PC-9 (cell line): ENCODE measurements at regions of chr6 and their contacts with region 1.

Region 1: DNA sequence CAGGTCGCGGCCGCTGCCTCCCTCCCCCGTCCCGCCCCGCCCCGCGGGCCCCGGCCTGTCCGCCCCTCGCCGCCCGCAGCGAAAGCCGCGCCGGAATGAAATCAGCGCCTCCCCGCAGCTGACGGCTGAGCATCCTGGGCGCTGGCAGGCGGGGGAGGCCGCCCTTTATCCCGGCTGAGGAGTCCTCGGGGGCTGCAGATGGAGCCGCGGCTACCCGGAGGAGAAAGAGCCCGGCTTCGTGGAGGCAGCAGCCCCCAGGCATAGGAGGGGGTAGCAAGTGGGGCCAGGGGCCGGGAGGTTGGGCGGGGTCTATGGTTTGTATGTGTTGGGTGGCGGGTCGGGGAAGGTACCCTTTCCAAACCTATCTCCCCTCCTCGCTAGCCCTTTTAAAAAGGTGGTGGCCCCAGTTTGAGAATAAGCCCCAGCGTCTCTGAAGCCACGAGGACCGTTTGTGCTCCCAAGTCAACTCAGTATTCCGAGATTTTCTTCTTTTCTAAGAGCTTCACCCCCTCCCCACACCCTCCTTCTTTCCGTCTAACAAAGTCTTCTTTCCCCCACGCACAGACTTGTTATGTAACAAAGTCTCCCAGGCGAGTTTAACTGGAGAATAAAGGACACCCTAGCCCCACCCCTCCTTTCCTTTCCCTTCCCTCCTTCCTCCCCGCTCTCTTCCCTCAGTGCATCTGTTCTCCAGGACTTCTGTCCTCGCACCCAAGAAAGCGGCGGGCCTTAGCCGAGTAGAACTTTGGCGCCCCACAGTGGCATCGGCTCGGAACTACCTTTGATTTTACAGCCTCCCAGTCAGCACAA is 11.0 kb downstream of the POU3F2 start:
- DNase-seq: peak in 1 of 2 experiments; percentile 73
- H3K4me3 ChIP-seq: no peak overlapping the region
- H3K27ac ChIP-seq: no peak overlapping the region
- H3K4me1 ChIP-seq: no peaks in the 10 kb centered on the region
- H3K27me3 ChIP-seq: no peaks in the 10 kb centered on the region
- CTCF ChIP-seq: peak; percentile 92

Region 2: GRCh38 chr6:97068211-97068610 is 1777.2 kb before region 1 on chr6:
- CTCF ChIA-PET with region 1: no interaction called
- POLR2A ChIA-PET with region 1: no interaction called
- intact Hi-C with region 1: loop called (anchors 2 kb)
- DNase-seq: no peak
- H3K4me3 ChIP-seq: no peak overlapping the region
- H3K27ac ChIP-seq: no peak overlapping the region
- H3K4me1 ChIP-seq: no peaks in the 10 kb centered on the region
- H3K27me3 ChIP-seq: no peaks in the 10 kb centered on the region
- CTCF ChIP-seq: peak; percentile 88

Region 3: DNA sequence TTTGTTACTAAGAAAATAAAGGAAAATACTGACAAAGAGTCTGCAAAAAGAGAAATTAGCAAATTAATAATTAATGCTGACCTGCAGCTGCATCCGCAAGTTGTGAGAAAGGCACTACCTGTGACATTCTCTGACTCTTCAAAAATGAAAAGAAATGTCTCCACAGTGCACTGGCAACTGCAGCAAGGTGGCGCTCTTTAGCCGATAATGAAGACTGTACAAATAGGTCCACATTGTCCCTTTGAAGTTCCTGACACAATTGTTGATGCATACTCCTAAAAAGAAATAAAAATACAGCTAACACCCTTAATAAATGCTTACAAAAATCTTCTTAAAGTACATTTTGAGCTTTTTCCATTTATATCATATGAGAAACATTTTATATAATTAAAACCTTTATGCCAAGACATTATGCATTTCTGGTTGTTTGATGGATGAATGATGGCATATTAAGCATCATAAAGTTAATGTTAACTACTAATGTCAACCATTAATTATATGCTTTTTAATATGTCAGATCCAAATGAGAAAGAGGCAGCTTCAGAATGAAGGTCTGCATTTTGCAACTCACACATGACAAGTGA is 1658.9 kb before region 1 on chr6:
- CTCF ChIA-PET with region 1: no interaction called
- POLR2A ChIA-PET with region 1: no interaction called
- intact Hi-C with region 1: loop called (anchors 5 kb)
- DNase-seq: peak in 1 of 2 experiments; percentile 39
- H3K4me3 ChIP-seq: no peak overlapping the region
- H3K27ac ChIP-seq: no peak overlapping the region
- H3K4me1 ChIP-seq: no peaks in the 10 kb centered on the region
- H3K27me3 ChIP-seq: no peaks in the 10 kb centered on the region
- CTCF ChIP-seq: peak; percentile 82

Region 4: DNA sequence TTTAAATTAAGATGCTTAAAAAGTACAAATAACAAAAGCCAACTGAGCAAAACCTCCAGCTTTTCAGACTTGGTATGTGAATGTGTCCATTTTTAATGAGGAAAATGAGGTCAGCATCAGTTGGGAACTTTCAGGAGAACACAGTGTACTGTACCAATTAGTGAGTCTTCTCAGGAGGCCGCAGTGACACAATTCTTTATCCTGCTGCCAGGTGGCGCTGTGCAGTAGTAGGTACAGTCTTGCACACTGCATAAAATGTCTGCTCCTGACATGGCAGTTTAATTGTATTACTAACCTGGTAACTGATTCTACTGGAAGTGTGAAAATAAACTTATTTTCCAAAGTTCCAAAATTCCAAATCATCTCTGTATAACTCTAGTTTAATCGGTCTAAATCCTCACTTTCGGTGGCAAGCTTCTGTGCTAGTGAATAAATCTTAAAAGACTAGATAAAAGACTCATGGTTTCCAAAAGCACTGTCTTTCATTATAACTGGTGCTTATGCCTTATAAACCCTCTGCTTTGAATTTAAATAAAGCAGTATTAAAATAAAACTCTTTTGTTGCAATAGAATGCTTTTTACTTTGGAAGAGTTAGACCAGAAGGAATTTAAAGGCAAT is 1347.6 kb before region 1 on chr6:
- CTCF ChIA-PET with region 1: no interaction called
- POLR2A ChIA-PET with region 1: no interaction called
- intact Hi-C with region 1: loop called (anchors 1 kb)
- DNase-seq: peak; percentile 49 to 54
- H3K4me3 ChIP-seq: no peak overlapping the region
- H3K27ac ChIP-seq: no peak overlapping the region
- H3K4me1 ChIP-seq: no peaks in the 10 kb centered on the region
- H3K27me3 ChIP-seq: no peaks in the 10 kb centered on the region
- CTCF ChIP-seq: peak; percentile 93

Region 5: DNA sequence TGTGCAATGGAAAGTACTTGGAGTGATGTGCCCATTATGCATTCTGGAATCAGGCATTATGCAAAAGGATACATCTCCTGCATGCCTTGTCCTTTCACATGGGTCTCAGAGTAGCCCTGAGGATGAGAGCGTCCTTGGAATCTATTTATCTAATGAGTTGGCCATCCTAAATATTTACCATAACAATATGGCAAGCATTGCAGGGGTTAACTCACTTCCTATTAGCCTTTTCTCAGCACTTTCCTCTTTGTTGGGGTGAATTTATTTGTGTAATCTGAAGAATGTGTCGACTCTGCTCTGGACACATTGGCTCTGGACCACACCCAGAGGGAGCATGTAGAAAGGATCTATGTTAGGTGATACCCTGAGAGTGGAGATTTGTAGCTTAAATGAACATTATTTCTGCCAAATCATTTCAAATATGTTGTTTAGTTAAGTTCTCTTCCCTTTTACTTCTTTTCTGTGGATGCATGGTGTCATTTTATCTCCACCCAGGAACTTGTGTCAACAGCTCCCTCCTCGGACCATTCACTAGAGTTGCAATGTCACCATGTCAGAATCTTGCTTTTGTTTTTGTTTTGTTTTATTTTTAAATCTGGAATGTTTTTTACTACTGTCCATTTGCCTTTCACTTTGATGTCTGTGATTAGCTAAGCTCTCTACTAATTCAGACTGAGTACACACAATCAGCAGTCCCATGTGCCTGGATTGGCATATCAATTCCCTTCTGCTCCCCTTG is 805.4 kb before region 1 on chr6:
- CTCF ChIA-PET with region 1: no interaction called
- POLR2A ChIA-PET with region 1: no interaction called
- intact Hi-C with region 1: loop called (anchors 10 kb)
- DNase-seq: peak in 1 of 2 experiments; percentile 6
- H3K4me3 ChIP-seq: no peak overlapping the region
- H3K27ac ChIP-seq: no peak overlapping the region
- H3K4me1 ChIP-seq: no peaks in the 10 kb centered on the region
- H3K27me3 ChIP-seq: no peaks in the 10 kb centered on the region
- CTCF ChIP-seq: peak; percentile 49; the same call in 1 of the 2 replicates

Region 6: DNA sequence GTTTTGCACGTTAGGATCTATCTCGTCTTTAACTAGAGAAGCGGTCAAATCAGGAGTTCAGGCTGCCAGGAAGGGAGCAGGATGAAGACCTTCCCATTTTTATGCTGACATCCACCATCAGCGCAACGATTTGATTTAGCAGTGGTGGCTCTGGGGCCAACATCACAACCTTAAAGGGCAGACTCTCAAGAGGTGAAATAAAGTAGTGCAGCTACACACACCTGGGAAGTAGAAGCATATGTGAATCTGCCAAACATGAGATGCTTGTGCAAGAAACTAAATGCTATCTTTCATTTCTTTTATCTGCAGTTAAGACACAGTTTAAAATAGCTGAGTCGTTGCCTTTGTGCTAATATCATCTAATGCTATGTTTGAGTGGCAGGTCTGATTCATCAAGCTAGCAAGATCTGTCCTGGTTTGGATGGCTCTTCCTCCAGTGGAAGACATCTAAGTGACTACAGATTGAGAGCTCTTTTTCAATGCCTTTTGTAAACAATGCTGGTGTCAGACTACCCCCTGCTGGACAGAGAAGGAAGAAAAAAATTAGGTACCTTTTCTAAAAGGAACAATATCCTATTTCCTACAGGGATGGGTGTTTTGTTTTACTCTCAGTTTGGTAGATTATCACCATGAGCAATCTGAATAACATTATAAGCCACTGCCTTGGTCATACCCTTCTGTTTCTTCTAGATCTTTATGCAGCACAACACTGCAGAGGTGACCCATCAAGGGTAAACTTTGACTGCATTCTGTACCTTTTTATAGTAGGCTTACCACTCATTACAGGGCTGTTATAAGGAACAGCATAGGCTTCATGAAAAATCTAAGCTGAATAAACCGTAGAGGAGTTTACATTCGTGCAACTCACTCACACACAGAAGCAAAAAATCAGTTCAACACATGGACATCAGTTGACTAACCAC is 274.0 kb after region 1 on chr6:
- CTCF ChIA-PET with region 1: no interaction called
- POLR2A ChIA-PET with region 1: no interaction called
- intact Hi-C with region 1: loop called (anchors 1 kb)
- DNase-seq: peak in 1 of 2 experiments; percentile 15
- H3K4me3 ChIP-seq: no peak overlapping the region
- H3K27ac ChIP-seq: no peak overlapping the region
- H3K4me1 ChIP-seq: 0 out of 2 replicates have a peak, but pooled peaks cover 4% of the 10 kb centered on the region
- H3K27me3 ChIP-seq: no peaks in the 10 kb centered on the region
- CTCF ChIP-seq: peak; percentile 85